Cardiac septum (tissue), 1 donor: ENCODE measurements at regions of chr9 and their contacts with region 1.

Region 1: GRCh38 chr9:38008168-38009034 is 60.6 kb downstream of the SHB start:
- DNase-seq: no peak

Region 2: DNA sequence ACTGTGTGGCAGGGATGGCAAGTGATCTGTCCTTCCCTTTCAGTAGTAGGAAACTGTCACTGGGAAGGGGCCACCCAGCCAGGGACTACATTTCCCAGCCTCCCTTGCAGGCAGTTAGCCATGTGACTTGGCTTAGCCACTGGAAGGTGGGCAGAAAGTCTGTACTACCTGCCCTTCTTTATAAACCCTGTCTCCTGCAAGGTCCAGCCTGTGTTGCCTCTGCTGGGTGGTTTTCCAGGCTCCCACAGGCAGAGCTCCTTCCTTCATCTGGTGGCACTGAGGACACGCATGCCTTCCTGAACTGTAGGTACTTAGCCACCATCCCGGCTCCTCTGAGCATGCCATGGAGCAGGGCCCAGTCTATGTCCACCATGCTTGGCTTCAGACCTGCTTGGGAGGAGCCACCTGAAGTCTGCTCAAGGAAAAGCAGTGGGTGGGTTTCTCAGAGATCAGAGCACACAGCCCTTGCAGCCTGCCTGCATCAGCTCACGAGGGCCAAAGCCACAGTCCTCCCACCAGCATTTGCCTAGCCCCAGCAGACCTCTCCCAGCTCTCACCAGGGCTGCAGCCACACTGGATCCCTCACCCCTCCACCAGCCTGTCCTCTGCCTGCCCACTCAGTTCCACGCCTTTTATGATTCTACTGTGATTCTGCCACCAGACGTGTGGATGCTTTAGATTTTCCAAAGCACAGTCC is 87.8 kb before region 1 on chr9:
- intact Hi-C with region 1: loop called (anchors 5 kb)
- DNase-seq: peak; percentile 54